ENCODE measurements at regions of chr14 and their contacts with region 1.

Region 1: GRCh38 chr14:50396631-50397390 is at the start of gene CDKL1:
- DNase-seq: peak in 40 of 42 donors; percentile 15 to 75 (median 52)

Region 2: DNA sequence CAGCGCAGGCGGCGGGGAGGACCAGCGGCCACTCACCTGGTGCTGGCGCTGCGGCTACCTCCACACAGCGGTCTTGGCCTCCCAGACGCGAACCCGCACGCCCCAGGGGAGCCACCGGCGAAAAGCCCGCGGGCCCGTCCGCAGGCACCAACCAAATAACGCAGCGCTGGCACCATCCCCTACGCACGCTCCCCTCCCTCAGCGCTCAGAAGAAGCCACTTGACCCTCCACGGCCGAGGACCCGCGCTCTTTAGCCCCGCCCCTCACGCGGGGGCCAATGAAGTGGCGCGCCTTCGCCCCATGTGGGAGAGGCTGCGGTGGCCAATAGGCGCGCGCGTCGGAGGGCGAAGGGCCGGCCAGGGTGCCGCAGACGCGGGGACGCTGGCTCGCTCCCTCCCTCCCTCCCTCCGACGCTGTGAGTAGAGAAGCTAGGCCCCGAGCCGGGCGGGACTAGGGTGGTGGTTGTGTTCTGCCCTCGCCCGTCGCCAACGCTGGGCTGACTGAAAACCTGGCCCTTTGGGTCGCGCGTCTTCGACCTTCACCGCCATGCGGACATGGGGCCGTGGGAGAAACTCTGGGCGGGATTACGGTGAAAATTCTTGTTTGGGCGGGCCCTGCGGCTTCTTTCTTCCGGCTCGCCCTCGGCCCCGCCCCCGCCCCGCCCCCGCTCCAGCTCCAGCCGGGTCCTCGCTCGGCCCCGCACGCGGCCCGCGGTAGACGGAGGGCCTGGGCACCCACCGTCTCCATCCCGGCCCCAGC is 84.7 kb before region 1 on chr14 and contains the starts of genes DMAC2L and L2HGDH:
- intact Hi-C with region 1: loop called (anchors 10 kb)
- DNase-seq: peak; percentile 80 to 98 (median 95)

Region 3: GRCh38 chr14:50342221-50343078 is 54.4 kb before region 1 on chr14:
- intact Hi-C with region 1: loop called (anchors 10 kb)
- DNase-seq: peak; percentile 50 to 91 (median 80)

Region 4: DNA sequence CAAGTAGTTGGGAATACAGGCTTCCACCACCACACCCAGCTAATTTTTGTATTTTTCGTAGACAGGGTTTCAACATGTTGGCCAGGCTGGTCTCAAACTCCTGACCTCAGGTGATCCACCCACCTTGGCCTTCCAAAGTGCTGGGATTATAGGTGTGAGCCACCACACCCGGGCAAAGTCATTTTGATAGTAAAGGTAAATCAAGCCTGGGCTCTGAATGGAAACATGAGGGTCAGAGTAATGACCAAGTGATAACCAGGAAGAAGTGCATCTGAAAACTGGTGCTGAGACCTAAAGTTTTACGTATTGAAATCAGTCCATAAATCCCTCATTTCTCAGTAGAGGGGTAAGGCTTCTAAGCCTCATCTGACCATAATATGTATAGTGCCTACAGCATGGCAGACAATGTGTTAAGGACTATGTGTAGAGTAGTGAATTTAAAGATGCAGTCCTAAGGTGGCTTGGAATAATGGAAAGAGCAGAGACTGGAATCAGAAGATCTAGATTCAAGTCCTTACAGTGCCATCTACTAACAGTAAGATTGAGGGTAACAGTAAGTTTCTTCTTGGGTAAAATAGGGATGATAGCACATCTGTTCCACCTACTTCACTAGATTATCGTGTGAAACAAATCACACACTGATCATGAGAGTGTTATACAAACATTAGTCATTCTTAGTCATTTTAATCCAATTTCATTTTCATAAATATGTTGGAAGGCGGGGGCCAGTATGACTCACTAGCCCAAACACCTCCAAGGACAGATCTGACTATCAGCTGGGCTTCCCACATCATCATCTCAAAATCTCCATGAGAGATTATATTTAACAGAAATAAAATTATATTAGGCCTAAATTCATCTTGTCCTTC is 124.4 kb after region 1 on chr14:
- intact Hi-C with region 1: loop called (anchors 10 kb)
- DNase-seq: peak in 1 of 42 donors; percentile 22

Region 5: GRCh38 chr14:50559990-50560930 is 163.4 kb after region 1 on chr14 and contains the start of gene ATL1:
- intact Hi-C with region 1: no loop called
- DNase-seq: peak; percentile 56 to 93 (median 83)

Region 6: GRCh38 chr14:50619556-50620141 is 222.8 kb after region 1 on chr14:
- intact Hi-C with region 1: no loop called
- DNase-seq: peak in 2 of 42 donors; percentile 27 to 49

Measured in head of caudate nucleus (tissue), 42 donors.